Activated naive CD4-positive, alpha-beta T cell treated with anti-CD3 and anti-CD28 coated beads for 36 hours (primary cell): ENCODE measurements at regions of chr7 and their contacts with region 1.

Region 1: DNA sequence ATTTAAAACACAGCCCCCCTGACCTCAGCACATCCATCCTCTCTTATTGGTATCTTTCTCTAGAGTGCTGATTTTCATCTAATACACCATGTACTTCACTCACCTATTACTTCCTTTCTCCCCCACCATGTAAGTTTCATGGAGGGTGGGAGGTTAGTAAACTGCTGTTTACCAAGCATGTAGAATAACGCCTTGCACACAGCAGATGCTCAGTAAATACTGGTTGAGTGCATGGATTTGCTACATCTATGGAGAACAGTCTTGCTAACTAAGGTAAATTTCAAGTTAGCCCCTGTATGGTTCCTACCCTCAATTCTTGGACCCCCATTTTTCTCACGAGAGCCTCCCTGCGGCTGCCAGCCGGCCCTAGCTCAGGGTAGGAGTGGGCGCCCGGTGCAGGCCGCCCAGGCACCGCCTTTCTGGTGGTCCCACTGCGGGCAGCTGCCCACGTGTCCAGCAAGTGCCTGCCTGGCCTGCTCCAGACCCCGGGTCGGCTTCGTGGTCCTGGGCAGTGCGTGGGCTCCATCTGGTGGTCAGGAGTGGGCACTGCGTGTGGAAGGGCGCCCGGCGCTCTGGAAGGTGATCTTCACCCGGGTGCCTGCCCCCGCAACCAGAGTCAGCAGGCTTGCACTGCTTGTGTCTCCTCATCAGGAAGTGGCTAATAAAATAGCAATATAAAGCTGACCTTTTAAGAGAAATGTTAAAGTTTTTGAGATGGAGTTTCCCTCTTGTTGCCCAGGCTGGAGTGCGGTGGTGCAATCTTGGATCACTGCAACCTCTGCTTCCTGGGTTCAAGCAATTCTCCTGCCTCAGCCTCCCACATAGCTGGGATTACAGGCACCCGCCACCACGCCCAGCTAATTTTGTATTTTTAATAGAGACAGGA is 63.4 kb upstream of the DNAJB6 start:
- DNase-seq: peak; percentile 66
- H3K4me3 Mint-ChIP-seq: no peak overlapping the region
- H3K27ac Mint-ChIP-seq: no peak overlapping the region
- H3K4me1 Mint-ChIP-seq: peaks cover 16% of the 10 kb centered on the region
- H3K27me3 Mint-ChIP-seq: peaks cover 9% of the 10 kb centered on the region

Region 2: GRCh38 chr7:155796381-155797261 is 1476.8 kb before region 1 on chr7:
- CTCF ChIA-PET with region 1: no interaction called
- intact Hi-C with region 1: loop called (anchors 10 kb)
- DNase-seq: peak; percentile 71
- H3K4me3 Mint-ChIP-seq: no peak overlapping the region
- H3K27ac Mint-ChIP-seq: no peak overlapping the region
- H3K4me1 Mint-ChIP-seq: no peaks in the 10 kb centered on the region
- H3K27me3 Mint-ChIP-seq: peaks cover 30% of the 10 kb centered on the region

Region 3: DNA sequence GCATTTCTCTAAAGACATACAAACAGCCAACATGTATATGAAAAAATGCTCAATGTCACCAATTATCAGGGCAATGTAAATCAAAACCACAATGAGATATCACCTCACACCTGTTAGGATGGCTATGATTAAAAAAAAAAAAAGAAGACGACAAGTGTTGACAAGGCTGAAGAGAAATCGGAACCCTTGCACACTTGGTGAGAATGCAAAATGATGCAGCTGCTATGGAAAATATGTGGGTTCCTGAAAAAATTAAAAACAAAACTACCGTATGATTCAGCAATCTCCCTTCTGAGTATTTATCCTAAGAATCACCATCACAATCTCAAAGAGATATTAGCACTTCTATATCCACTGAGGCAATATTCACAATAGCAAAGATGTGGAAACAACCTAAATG is 391.8 kb before region 1 on chr7:
- CTCF ChIA-PET with region 1: no interaction called
- intact Hi-C with region 1: no loop called
- DNase-seq: no peak
- H3K4me3 Mint-ChIP-seq: no peak overlapping the region
- H3K27ac Mint-ChIP-seq: no peak overlapping the region
- H3K4me1 Mint-ChIP-seq: peaks cover 52% of the 10 kb centered on the region
- H3K27me3 Mint-ChIP-seq: no peaks in the 10 kb centered on the region

Region 4: GRCh38 chr7:156907656-156908055 is 365.8 kb before region 1 on chr7:
- CTCF ChIA-PET with region 1: no interaction called
- intact Hi-C with region 1: loop called (anchors 1 kb)
- DNase-seq: no peak
- H3K4me3 Mint-ChIP-seq: no peak overlapping the region
- H3K27ac Mint-ChIP-seq: no peak overlapping the region
- H3K4me1 Mint-ChIP-seq: peaks cover 12% of the 10 kb centered on the region
- H3K27me3 Mint-ChIP-seq: peaks cover 7% of the 10 kb centered on the region

Region 5: DNA sequence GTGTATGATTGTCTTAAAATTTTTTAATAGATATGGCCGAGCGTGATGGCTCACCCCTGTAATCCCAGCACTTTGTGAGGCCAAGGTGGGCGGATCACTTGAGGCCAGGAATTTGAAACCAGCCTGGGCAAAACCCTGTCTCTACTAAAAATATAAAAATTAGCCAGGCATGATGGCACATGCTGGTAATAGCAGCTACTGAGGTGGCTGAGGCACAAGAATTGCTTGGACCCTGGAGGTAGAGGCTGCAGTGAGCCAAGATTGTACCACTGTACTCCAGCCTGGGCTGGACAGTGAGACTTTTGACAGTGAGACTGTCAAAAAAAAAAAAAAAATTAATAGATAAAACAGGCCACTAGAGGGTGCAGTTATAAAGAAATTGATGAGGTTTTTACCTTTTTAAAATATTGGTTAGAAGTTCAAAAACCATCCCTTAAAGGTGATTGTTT is 303.5 kb before region 1 on chr7:
- CTCF ChIA-PET with region 1: interaction called, 8 read pairs
- intact Hi-C with region 1: loop called (anchors 5 kb)
- DNase-seq: no peak
- H3K4me3 Mint-ChIP-seq: no peak overlapping the region
- H3K27ac Mint-ChIP-seq: no peak overlapping the region
- H3K4me1 Mint-ChIP-seq: no peaks in the 10 kb centered on the region
- H3K27me3 Mint-ChIP-seq: no peaks in the 10 kb centered on the region

Region 6: DNA sequence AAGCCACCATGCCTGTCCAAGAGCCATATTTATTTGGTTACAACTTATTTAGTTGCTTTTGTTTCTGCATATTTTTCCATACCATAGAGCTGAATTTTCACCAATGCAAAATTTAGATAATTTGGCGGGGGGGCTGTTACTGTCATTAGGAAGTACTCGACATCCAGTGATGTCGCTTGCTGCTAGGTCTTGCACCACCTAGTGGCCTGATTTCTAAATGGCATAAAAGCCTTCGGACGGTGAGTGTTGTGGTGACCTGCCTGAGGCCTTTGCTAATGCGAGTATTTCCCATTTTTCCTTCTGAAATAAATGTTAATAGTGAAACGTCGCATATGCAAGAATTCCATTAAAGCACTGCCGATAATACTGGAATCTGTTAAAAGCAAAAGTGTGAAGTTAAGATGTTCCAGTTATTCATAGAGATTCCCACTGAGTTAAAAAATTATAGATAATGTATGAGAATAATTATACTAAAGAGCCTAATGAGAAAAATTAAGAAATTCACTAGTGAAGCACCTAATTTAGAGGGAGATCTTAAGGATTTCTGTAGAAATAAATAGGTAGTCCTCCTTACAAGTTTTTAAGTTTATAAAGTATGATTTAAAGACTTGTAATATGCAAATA is 22.7 kb before region 1 on chr7:
- CTCF ChIA-PET with region 1: interaction called, 15 read pairs
- intact Hi-C with region 1: no loop called
- DNase-seq: peak; percentile 70
- H3K4me3 Mint-ChIP-seq: no peak overlapping the region
- H3K27ac Mint-ChIP-seq: no peak overlapping the region
- H3K4me1 Mint-ChIP-seq: no peaks in the 10 kb centered on the region
- H3K27me3 Mint-ChIP-seq: no peaks in the 10 kb centered on the region